ENCODE measurements at regions of chr11 and their contacts with region 1.

Region 1: DNA sequence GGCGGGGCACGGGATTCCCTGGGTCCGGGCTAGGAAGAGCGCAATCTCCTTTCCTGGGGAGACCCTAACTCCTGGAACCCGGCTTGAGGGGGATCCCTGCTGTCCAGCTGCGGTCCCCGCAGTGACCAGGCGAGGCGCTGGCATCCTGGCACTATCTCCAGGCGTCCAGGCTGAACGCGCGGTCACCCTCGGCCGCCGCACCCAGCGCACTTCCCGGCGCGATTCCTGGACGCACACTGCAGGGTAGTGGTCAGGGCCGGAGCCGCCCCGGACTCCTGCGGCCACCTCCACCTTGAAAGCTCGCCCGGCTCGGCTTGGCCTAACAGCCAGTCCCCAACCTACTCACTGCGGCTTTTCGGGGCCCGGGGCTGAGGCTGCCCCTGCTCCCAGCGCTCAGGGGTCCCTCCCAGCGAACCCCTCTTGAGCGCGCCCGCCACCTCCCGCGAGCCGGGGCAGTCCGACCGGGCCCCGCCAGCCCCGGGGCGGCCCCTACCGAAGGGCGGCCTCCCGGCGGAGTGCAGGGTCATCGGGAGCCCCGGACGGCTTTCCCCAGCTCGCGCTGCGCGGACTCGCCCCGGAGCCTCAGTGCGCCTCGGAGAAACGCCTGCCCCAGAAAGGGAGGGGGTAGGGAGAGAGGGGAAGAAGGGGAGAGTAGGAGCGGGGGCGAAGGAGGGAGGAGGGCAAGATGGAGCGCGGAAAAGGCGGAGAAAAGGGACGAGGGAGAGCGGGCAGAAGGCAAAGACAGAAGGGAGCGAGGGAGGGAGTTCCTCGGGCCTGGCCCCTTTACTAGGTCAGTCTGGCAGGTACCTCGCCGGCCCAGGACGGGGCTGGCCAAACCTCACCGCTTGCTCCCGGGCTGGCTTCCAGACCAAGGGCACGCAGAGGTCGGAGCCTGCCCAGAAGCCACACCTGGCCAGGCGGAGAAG is 1.0 kb downstream of the POU2AF3 start:
- DNase-seq: peak; percentile 59 to 82
- ATAC-seq: peak; percentile 72

Region 2: GRCh38 chr11:111148953-111149352 is 150.4 kb before region 1 on chr11:
- intact Hi-C with region 1: no loop called
- DNase-seq: no peak
- ATAC-seq: no peak

Region 3: GRCh38 chr11:111422494-111423249 is 123.3 kb after region 1 on chr11:
- intact Hi-C with region 1: loop called in 1 of 2 experiments (anchors 5 kb)
- DNase-seq: peak; percentile 57 to 74
- ATAC-seq: peak; percentile 88